ENCODE measurements at regions of chr7 and their contacts with region 1.

Region 1: DNA sequence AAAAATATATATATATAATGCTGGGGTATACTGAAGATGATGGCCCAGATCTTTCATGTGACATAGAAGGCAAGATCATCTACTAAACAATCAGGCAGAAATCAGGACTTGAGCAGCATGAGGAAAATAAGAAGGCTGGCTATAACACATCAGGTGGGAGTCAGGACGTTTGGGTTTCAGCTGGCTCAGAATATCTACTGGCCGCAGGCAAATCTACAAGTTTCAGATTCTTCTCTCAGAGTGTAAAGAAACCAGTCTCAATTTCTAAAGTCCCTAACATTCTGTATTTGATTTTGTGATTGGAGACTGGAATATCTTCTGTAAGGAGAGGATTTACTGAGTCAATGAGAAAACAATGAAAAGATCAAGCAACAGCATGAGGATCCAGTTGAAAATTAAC is 37.7 kb upstream of the FAM3C start:
- DNase-seq: no peak
- ATAC-seq: no peak
- H3K4me3 ChIP-seq: no peak overlapping the region
- H3K4me3 Mint-ChIP-seq: no peak overlapping the region
- H3K27ac ChIP-seq: no peak overlapping the region
- H3K27ac Mint-ChIP-seq: no peak overlapping the region
- H3K4me1 ChIP-seq: peaks cover 11% of the 10 kb centered on the region
- H3K4me1 Mint-ChIP-seq: peaks cover 11 to 12% of the 10 kb centered on the region in 2 donors
- H3K27me3 ChIP-seq: no peaks in the 10 kb centered on the region
- H3K27me3 Mint-ChIP-seq: no peaks in the 10 kb centered on the region
- CTCF ChIP-seq: no peak

Region 2: GRCh38 chr7:121385800-121386179 is 48.0 kb before region 1 on chr7:
- intact Hi-C with region 1: loop called (anchors 10 kb)
- DNase-seq: peak in 1 of 2 donors; percentile 64
- ATAC-seq: peak; percentile 87 to 94 (median 89)
- H3K4me3 ChIP-seq: no peak overlapping the region
- H3K4me3 Mint-ChIP-seq: no peak overlapping the region
- H3K27ac ChIP-seq: peak overlapping the region; percentile 75
- H3K27ac Mint-ChIP-seq: peak overlapping the region; percentile 54 to 56
- H3K4me1 ChIP-seq: no peaks in the 10 kb centered on the region
- H3K4me1 Mint-ChIP-seq: peaks cover 70 to 75% of the 10 kb centered on the region in 2 donors
- H3K27me3 ChIP-seq: no peaks in the 10 kb centered on the region
- H3K27me3 Mint-ChIP-seq: no peaks in the 10 kb centered on the region
- CTCF ChIP-seq: no peak